Activated B cell treated with CpG ODN at 0.5 μM for 24 hours (primary cell): ENCODE measurements at regions of chr3 and their contacts with region 1.

Region 1: GRCh38 chr3:183188895-183189462 is 26.4 kb upstream of the LAMP3 start:
- DNase-seq: no peak
- ATAC-seq: peak; percentile 56
- H3K4me3 Mint-ChIP-seq: no peak overlapping the region
- H3K27ac Mint-ChIP-seq: no peak overlapping the region
- H3K4me1 Mint-ChIP-seq: peaks cover 5% of the 10 kb centered on the region
- H3K27me3 Mint-ChIP-seq: peaks cover 33% of the 10 kb centered on the region
- CTCF ChIP-seq: no peak

Region 2: GRCh38 chr3:183766745-183767606 is 578.0 kb after region 1 on chr3:
- CTCF ChIA-PET with region 1: interaction called, 11 read pairs
- POLR2A ChIA-PET with region 1: no interaction called
- intact Hi-C with region 1: no loop called
- DNase-seq: peak; percentile 32
- ATAC-seq: peak; percentile 86
- H3K4me3 Mint-ChIP-seq: no peak overlapping the region
- H3K27ac Mint-ChIP-seq: no peak overlapping the region
- H3K4me1 Mint-ChIP-seq: peaks cover 9% of the 10 kb centered on the region
- H3K27me3 Mint-ChIP-seq: no peaks in the 10 kb centered on the region
- CTCF ChIP-seq: no peak